ENCODE measurements at regions of chr7 and their contacts with region 1.

Region 1: GRCh38 chr7:88243345-88243909 is 23.6 kb upstream of the SRI start:
- DNase-seq: peak; percentile 50 to 75 (median 73)
- H3K4me3 ChIP-seq: no peak overlapping the region
- H3K27ac ChIP-seq: no peak overlapping the region
- H3K4me1 ChIP-seq: no peaks in the 10 kb centered on the region
- H3K27me3 ChIP-seq: no peaks in the 10 kb centered on the region

Region 2: GRCh38 chr7:88206254-88206653 is 37.2 kb before region 1 on chr7:
- CTCF ChIA-PET with region 1: no interaction called
- POLR2A ChIA-PET with region 1: no interaction called
- DNase-seq: no peak
- H3K4me3 ChIP-seq: no peak overlapping the region
- H3K27ac ChIP-seq: no peak overlapping the region
- H3K4me1 ChIP-seq: no peaks in the 10 kb centered on the region
- H3K27me3 ChIP-seq: no peaks in the 10 kb centered on the region

Region 3: DNA sequence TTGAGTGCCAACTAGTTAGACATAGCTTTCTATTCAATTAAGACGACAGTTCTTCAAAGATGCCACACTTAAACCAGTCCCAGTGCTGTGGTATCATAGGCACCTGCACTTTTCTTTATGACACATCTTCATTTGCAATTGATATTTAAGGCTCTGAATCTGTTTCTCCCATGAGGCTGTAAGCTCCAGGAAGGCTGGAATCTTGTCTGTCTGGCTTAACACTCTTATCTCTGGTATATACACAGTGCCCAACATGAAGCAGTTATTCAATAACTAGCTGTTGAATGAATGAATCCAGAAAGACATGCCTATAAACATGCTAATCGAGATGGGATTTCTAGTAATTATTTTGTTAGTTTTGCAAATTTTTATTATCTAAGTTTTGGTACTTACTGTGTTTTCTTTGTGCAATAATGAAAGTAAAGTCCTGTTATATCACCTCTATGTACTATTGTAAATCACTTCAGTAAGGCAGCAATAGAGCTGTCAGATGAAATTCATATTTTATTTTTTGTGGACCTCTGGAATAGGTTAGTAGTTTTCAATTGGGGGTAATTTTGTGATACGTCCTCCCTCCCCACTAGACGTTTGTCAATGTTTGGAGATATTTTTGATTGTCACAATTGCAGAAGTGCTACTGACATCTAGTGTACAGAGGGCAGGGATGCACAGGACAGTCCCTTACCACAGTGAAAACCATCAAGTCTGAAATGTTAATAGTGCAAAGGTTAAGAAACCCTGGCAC is 114.5 kb after region 1 on chr7:
- CTCF ChIA-PET with region 1: interaction called, 10 read pairs
- POLR2A ChIA-PET with region 1: no interaction called
- DNase-seq: peak in 2 of 3 donors; percentile 35 to 46
- H3K4me3 ChIP-seq: peak overlapping the region in 1 of 7 experiments; percentile 29
- H3K27ac ChIP-seq: no peak overlapping the region
- H3K4me1 ChIP-seq: peaks cover 0 to 18% (median 9%) of the 10 kb centered on the region in 4 experiments
- H3K27me3 ChIP-seq: no peaks in the 10 kb centered on the region

Region 4: GRCh38 chr7:89622838-89623672 is 1379.6 kb after region 1 on chr7:
- CTCF ChIA-PET with region 1: interaction called, 11 read pairs
- POLR2A ChIA-PET with region 1: no interaction called
- DNase-seq: peak; percentile 41 to 71 (median 67)
- H3K4me3 ChIP-seq: no peak overlapping the region
- H3K27ac ChIP-seq: no peak overlapping the region
- H3K4me1 ChIP-seq: no peaks in the 10 kb centered on the region
- H3K27me3 ChIP-seq: no peaks in the 10 kb centered on the region

Measured in common myeloid progenitor, CD34-positive (primary cell).